Activated T-helper 1 cell treated with anti-CD3 and anti-CD28 coated beads, Interleukin-12 subunit alpha, Interleukin-12 subunit beta, Interleukin-2, Interleukin-4 antibody, amounts not matched to agents 30 ng/mL and 10 ng/mL and 1 ng/mL, durations not matched to agents 14 hours and 24 hours and 36 hours (primary cell): ENCODE measurements at regions of chr14 and their contacts with region 1.

Region 1: GRCh38 chr14:70907176-70907995 is at the start of gene PCNX1:
- DNase-seq: peak; percentile 84
- H3K4me3 Mint-ChIP-seq: peak within 1 kb of the TSS; percentile 86
- H3K27ac Mint-ChIP-seq: peak within 1 kb of the TSS; percentile 94
- H3K4me1 Mint-ChIP-seq: peaks cover 59% of the 10 kb centered on the region
- H3K27me3 Mint-ChIP-seq: peaks cover 2% of the 10 kb centered on the region
- total RNA-seq, gene PCNX1: 37.9 and 42.7 TPM in 2 replicates

Region 2: DNA sequence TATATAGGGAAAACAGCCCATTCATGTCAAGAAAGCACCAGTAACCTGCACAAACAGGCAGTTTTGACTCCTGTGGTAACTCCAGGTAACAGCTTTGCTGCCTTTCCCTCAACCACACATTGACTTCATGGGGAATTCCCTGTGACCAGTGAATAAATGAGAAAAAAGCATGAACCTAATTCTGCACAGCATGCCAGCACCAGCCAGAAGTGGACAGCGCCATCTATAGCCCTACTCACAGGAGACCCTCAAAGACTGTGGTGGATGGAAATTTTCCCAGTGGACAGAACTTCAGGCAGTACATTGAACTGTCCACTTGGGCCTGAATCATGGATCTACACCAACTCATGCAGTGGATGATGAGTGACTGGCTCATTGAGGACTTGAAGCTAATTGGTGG is 870.7 kb before region 1 on chr14:
- intact Hi-C with region 1: no loop called
- DNase-seq: no peak
- H3K4me3 Mint-ChIP-seq: no peak overlapping the region
- H3K27ac Mint-ChIP-seq: no peak overlapping the region
- H3K4me1 Mint-ChIP-seq: no peaks in the 10 kb centered on the region
- H3K27me3 Mint-ChIP-seq: peaks cover 10% of the 10 kb centered on the region

Region 3: GRCh38 chr14:70821584-70822529 is 85.5 kb before region 1 on chr14:
- intact Hi-C with region 1: loop called (anchors 1 kb)
- DNase-seq: peak; percentile 48
- H3K4me3 Mint-ChIP-seq: peak overlapping the region; percentile 69
- H3K27ac Mint-ChIP-seq: peak overlapping the region; percentile 61
- H3K4me1 Mint-ChIP-seq: peaks cover 24% of the 10 kb centered on the region
- H3K27me3 Mint-ChIP-seq: peaks cover 3% of the 10 kb centered on the region

Region 4: DNA sequence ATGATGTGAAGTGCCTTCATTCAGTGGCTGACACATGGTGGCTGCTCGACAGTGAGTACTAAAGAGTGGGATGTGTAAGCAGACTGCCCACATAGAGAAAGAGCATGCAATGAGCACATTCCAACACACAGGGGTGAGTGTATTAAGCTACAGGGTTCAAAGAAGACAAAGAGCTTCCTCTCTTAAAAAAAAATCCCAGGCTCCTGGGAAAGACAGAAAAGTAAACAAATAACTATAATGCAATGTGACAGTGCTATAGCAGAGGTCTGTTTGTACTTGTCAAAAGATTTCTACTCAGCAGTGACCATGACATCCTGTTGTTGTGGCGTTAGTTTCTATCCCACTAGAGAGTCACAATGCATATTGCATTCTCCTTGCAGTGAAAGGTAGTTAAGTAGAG is 12.5 kb before region 1 on chr14:
- intact Hi-C with region 1: loop called (anchors 1 kb)
- DNase-seq: no peak
- H3K4me3 Mint-ChIP-seq: no peak overlapping the region
- H3K27ac Mint-ChIP-seq: peak overlapping the region; percentile 68
- H3K4me1 Mint-ChIP-seq: peaks cover 77% of the 10 kb centered on the region
- H3K27me3 Mint-ChIP-seq: peaks cover 2% of the 10 kb centered on the region

Region 5: GRCh38 chr14:70934502-70935134 is 27.2 kb after region 1 on chr14:
- intact Hi-C with region 1: loop called (anchors 2 kb)
- DNase-seq: no peak
- H3K4me3 Mint-ChIP-seq: peak overlapping the region; percentile 53
- H3K27ac Mint-ChIP-seq: peak overlapping the region; percentile 67
- H3K4me1 Mint-ChIP-seq: peaks cover 62% of the 10 kb centered on the region
- H3K27me3 Mint-ChIP-seq: no peaks in the 10 kb centered on the region

Region 6: GRCh38 chr14:70972107-70972976 is 65.0 kb after region 1 on chr14:
- intact Hi-C with region 1: loop called (anchors 1 kb)
- DNase-seq: peak; percentile 69
- H3K4me3 Mint-ChIP-seq: no peak overlapping the region
- H3K27ac Mint-ChIP-seq: no peak overlapping the region
- H3K4me1 Mint-ChIP-seq: peaks cover 14% of the 10 kb centered on the region
- H3K27me3 Mint-ChIP-seq: no peaks in the 10 kb centered on the region